Activated CD4-positive, alpha-beta T cell treated with anti-CD3 and anti-CD28 coated beads for 36 hours (primary cell): ENCODE measurements at regions of chr16 and their contacts with region 1.

Region 1: DNA sequence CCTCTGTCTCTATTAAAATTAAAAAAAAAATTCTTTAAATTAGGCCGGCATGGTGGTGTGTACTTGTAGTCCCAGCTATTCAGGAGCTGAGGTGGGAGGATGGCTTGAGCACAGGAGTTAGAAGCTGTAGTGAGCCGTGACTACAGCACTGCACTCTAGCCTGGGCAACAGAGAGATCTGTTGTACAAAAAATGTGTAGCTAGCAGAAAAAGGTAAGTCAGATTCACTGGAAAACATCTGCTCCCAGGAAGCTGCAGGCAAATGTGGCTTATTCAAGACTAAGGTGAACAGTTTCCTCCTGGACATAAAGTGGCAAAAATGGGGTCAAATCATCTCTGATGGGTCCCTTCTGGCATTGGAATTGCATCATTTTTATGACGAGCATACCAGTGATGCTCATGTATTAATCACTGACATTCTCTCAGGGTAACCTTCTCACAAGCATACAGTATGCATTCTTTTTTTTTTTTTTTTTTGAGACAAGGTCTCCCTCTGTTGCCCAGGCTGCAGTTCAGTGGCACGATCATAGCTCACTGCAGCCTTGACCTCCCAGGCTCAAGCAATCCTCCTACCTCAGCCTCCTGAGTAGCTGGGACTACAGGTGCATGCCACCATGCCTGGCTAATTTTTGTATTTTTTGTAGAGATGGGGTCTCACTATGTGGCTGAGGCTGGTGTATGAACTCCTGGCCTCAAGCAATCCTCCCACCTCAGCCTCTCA is 48.7 kb downstream of the CPPED1 start:
- DNase-seq: no peak
- ATAC-seq: no peak
- H3K4me3 Mint-ChIP-seq: no peak overlapping the region
- H3K27ac Mint-ChIP-seq: no peak overlapping the region
- H3K4me1 Mint-ChIP-seq: peaks cover 23% of the 10 kb centered on the region
- H3K27me3 Mint-ChIP-seq: no peaks in the 10 kb centered on the region

Region 2: DNA sequence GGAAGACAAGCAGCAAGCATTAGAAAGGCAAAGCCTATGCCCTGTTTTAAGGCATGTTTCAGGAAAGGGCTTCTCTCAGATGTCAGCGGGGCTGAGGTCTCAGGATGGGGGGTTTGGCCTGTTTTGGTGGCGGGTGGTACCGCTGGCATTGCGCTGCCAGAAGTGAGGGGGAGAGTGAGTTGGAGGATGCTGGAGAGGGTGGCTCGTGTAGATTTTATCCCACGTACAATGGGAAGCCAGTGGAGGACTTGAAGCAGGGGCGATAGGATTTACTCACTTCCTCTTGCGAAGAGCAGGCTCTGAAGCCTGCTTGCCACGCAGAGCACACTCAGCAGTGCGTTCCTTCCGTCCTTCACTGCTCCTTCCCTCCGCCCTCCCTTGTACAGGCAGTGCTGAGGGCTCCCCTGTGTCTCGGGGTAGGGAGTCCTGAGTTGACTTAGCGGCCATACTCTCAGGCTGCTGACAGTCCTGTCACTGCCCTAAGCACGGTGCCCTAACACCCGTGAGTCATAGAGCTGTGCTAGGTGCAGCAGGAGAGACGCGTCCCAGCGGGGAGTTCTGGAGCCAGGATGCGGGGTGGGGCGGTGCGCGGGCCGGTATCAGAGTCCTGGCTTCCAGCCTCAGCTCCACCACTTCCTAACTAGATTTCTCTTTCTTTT is 665.4 kb before region 1 on chr16:
- CTCF ChIA-PET with region 1: no interaction called
- POLR2A ChIA-PET with region 1: no interaction called
- intact Hi-C with region 1: loop called in 1 of 2 experiments (anchors 2 kb)
- DNase-seq: peak; percentile 71
- ATAC-seq: peak; percentile 96
- H3K4me3 Mint-ChIP-seq: peak overlapping the region; percentile 64
- H3K27ac Mint-ChIP-seq: peak overlapping the region; percentile 89
- H3K4me1 Mint-ChIP-seq: peaks cover 40% of the 10 kb centered on the region
- H3K27me3 Mint-ChIP-seq: no peaks in the 10 kb centered on the region

Region 3: DNA sequence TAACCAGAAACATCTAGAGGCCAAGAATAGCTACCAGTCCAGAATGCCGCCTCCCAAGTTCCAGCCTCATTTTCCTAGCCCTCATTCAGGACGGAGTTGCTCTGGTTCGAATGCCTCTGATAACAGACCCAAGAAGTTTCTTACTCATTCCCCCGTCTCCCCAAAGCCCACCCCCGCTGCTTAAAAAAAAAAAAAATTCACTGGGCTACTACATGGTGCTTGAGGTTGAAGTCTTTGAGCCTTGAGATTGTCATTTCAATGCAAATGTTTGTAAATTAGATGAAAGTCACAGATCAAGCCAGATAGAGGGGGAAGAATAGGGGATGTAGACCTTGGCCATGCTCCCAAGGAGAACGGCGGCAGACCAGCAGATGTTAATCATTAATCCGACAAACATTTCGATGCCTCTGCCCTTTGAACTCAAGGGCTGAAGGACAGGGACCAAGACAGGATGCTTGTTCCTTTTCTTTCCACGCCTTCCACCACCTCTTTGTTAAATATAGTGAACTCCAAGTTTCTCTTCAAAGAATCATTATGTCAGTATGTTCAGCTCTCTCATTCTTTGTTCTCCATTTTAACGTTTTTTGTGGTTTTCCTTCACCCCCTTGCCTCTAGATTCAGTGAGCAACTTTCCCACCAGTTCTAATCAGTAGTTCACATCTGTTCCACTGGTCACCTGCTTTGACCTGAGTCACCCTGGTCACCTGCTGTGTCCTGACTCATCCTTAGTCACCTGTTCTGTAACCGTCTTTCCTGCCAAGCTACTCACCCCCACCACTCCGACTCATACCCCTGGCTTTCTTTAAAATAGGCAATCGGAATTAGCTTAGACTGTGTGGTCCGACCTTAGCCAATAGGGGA is 141.6 kb before region 1 on chr16:
- CTCF ChIA-PET with region 1: no interaction called
- POLR2A ChIA-PET with region 1: interaction called, 10 read pairs
- intact Hi-C with region 1: loop called (anchors 1 kb)
- DNase-seq: peak; percentile 83
- ATAC-seq: peak; percentile 86
- H3K4me3 Mint-ChIP-seq: peak overlapping the region; percentile 49
- H3K27ac Mint-ChIP-seq: peak overlapping the region; percentile 89
- H3K4me1 Mint-ChIP-seq: peaks cover 50% of the 10 kb centered on the region
- H3K27me3 Mint-ChIP-seq: no peaks in the 10 kb centered on the region

Region 4: GRCh38 chr16:12699161-12699560 is 55.8 kb before region 1 on chr16:
- CTCF ChIA-PET with region 1: no interaction called
- POLR2A ChIA-PET with region 1: no interaction called
- intact Hi-C with region 1: loop called in 1 of 2 experiments (anchors 1 kb)
- DNase-seq: no peak
- ATAC-seq: no peak
- H3K4me3 Mint-ChIP-seq: no peak overlapping the region
- H3K27ac Mint-ChIP-seq: no peak overlapping the region
- H3K4me1 Mint-ChIP-seq: peaks cover 16% of the 10 kb centered on the region
- H3K27me3 Mint-ChIP-seq: no peaks in the 10 kb centered on the region

Region 5: GRCh38 chr16:12803203-12804097 is 48.5 kb after region 1 on chr16 and contains the start of gene CPPED1:
- CTCF ChIA-PET with region 1: no interaction called
- POLR2A ChIA-PET with region 1: interaction called, 3 read pairs
- intact Hi-C with region 1: loop called (anchors 1 kb)
- DNase-seq: peak; percentile 95
- ATAC-seq: peak; percentile 93
- H3K4me3 Mint-ChIP-seq: peak within 1 kb of the TSS; percentile 97
- H3K27ac Mint-ChIP-seq: peak within 1 kb of the TSS; percentile 92
- H3K4me1 Mint-ChIP-seq: peaks cover 28% of the 10 kb centered on the region
- H3K27me3 Mint-ChIP-seq: no peaks in the 10 kb centered on the region
- total RNA-seq, gene CPPED1: 8.0 to 9.8 TPM